ENCODE measurements at regions of chr16 and their contacts with region 1.

Region 1: GRCh38 chr16:483341-484075 is 44.0 kb upstream of the CAPN15 start:
- DNase-seq: peak in 1 of 5 donors; percentile 32
- ATAC-seq: peak; percentile 76 to 91 (median 82)
- H3K4me3 ChIP-seq: no peak overlapping the region
- H3K27ac ChIP-seq: peak overlapping the region in 9 of 12 donors; percentile 16 to 76 (median 70)
- H3K4me1 ChIP-seq: peaks cover 0 to 18% (median 2%) of the 10 kb centered on the region in 12 donors
- H3K27me3 ChIP-seq: no peaks in the 10 kb centered on the region
- CTCF ChIP-seq: no peak
- POLR2A ChIP-seq: no peak

Region 2: GRCh38 chr16:430904-431303 is 52.6 kb before region 1 on chr16:
- intact Hi-C with region 1: loop called in 1 of 10 experiments (anchors 10 kb)
- DNase-seq: no peak
- ATAC-seq: no peak
- H3K4me3 ChIP-seq: no peak overlapping the region
- H3K27ac ChIP-seq: no peak overlapping the region
- H3K4me1 ChIP-seq: peaks cover 0 to 28% (median 17%) of the 10 kb centered on the region in 12 donors
- H3K27me3 ChIP-seq: no peaks in the 10 kb centered on the region
- CTCF ChIP-seq: no peak
- POLR2A ChIP-seq: no peak

Region 3: GRCh38 chr16:450385-451134 is 32.9 kb before region 1 on chr16:
- intact Hi-C with region 1: no loop called
- DNase-seq: no peak
- ATAC-seq: no peak
- H3K4me3 ChIP-seq: no peak overlapping the region
- H3K27ac ChIP-seq: no peak overlapping the region
- H3K4me1 ChIP-seq: peaks cover 0 to 9% (median 0%) of the 10 kb centered on the region in 12 donors
- H3K27me3 ChIP-seq: no peaks in the 10 kb centered on the region
- CTCF ChIP-seq: no peak
- POLR2A ChIP-seq: no peak

Region 4: DNA sequence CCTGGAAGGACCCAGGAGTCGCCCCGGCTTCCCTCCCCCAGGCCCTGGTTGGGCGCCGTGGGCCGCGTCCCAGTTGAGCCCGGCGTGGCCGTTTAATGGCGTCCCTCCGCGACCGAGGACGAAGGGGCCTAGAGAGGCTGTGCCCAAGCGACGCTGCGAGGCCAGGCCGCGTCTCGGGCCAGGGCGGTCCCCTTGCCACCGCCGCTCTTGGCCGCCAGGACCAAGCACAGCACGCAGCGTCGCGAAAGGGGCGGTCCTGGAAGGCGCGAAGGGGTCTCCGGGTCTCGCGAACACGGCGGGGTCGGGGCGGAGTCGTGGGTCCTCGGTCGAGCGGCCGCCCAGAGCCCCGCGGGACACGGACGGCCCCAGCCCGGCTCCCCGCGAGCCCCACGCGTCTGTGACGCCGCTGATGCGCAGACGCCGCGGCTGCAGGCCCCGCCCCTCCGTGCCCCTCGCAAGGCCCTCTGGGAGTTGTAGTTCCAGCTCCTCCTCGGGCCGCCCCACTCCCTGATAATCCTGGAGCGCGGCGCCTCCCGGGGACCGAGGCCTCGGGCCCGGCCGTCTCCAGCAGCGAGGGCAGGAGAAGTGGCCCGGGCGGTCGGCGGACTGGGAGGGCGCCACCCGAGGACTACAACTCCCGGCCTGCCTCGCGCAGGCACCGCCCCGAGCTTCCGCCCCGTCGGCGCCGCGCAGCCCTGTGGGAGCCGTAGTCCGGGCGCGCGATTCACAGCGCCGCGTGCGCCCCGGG is 43.7 kb after region 1 on chr16 and contains the start of gene CAPN15:
- intact Hi-C with region 1: no loop called
- DNase-seq: peak; percentile 88 to 94 (median 90)
- ATAC-seq: peak; percentile 60 to 89 (median 84)
- H3K4me3 ChIP-seq: peak within 1 kb of the TSS; percentile 58 to 94 (median 76)
- H3K27ac ChIP-seq: peak within 1 kb of the TSS; percentile 89 to 100 (median 98)
- H3K4me1 ChIP-seq: peaks cover 11 to 59% (median 39%) of the 10 kb centered on the region in 12 donors
- H3K27me3 ChIP-seq: no peaks in the 10 kb centered on the region
- CTCF ChIP-seq: peak in 5 of 12 donors; percentile 6 to 33 (median 26)
- POLR2A ChIP-seq: peak in 1 of 2 donors; percentile 91
- total RNA-seq, gene CAPN15: 12.0 to 35.5 (median 20.0) TPM

Measured in heart left ventricle (tissue), 16 donors.